ENCODE measurements at regions of chr14 and their contacts with region 1.

Region 1: GRCh38 chr14:96100161-96101029 is 61.2 kb downstream of the C14orf132 start:
- DNase-seq: no peak
- H3K4me3 ChIP-seq: no peak overlapping the region
- CTCF ChIP-seq: peak; percentile 86

Region 2: GRCh38 chr14:95561001-95561412 is 539.4 kb before region 1 on chr14:
- CTCF ChIA-PET with region 1: interaction called, 14 read pairs
- POLR2A ChIA-PET with region 1: no interaction called
- DNase-seq: peak; percentile 21
- H3K4me3 ChIP-seq: no peak overlapping the region
- CTCF ChIP-seq: peak; percentile 85

Region 3: GRCh38 chr14:95935228-95935822 is 165.1 kb before region 1 on chr14:
- CTCF ChIA-PET with region 1: no interaction called
- POLR2A ChIA-PET with region 1: no interaction called
- DNase-seq: no peak
- H3K4me3 ChIP-seq: no peak overlapping the region
- CTCF ChIP-seq: no peak

Region 4: DNA sequence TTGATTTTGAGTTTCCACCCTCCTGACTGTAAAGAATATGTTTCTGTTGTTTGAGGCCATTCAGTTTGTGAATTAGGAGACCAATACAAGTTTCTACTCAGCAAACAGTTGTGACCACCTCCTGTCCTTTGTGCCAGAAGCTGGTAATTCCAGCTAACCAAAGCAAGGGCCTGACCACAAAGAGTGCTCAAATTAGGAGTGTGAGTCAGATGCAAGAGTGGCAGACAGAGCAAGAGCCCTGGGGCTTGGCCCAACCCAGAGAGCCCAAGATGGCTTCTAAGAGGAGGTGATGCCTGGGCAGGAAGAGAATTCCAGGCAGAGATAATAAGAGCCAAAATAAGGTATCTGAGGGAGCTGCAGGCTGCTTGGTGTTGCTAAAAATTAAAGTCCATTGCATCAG is 138.9 kb before region 1 on chr14:
- CTCF ChIA-PET with region 1: no interaction called
- POLR2A ChIA-PET with region 1: no interaction called
- DNase-seq: no peak
- H3K4me3 ChIP-seq: no peak overlapping the region
- CTCF ChIP-seq: no peak

Region 5: DNA sequence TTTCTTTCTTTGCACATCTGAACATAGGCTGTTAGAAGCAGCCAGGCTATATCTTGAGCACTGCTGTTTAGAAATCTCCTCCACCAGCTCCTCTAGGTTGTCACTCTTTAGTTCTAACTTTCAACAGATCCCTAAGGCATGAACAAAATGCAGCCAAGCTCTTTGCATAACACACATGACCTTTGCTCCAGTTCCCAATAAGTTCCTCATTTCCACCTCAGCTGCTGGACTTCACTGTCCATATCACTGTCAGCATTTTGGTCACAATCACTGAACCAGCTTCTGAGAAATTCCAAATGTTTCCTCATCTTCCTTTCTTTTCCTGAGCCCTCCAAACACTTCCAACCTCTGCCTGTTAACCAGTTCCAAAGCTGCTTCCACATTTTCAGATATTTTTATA is 88.8 kb before region 1 on chr14:
- CTCF ChIA-PET with region 1: interaction called, 708 read pairs
- POLR2A ChIA-PET with region 1: no interaction called
- DNase-seq: no peak
- H3K4me3 ChIP-seq: no peak overlapping the region
- CTCF ChIP-seq: no peak

Region 6: GRCh38 chr14:96056509-96057422 is 43.6 kb before region 1 on chr14:
- CTCF ChIA-PET with region 1: interaction called, 10 read pairs
- POLR2A ChIA-PET with region 1: no interaction called
- DNase-seq: no peak
- H3K4me3 ChIP-seq: no peak overlapping the region
- CTCF ChIP-seq: no peak

Region 7: DNA sequence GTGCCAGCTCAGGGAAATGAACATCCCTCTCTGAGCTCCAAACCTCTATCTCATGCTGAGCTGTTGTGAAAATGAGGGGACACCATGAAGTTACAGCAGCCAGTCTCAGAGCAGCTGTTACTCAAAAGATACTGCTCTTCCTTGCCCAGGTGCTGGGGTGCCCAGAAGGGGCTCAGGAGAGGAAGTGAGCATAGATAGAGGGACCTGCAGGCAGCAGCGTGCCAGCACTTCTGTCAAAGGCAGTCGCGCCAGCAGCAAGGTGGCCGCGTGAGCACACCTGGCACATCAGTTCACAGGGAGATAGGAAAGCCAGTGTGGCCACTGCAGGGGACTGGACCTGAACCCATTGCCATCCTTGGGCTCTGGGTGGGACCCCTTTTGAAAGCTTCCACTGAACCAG is 33.4 kb before region 1 on chr14:
- CTCF ChIA-PET with region 1: no interaction called
- POLR2A ChIA-PET with region 1: no interaction called
- DNase-seq: no peak
- H3K4me3 ChIP-seq: no peak overlapping the region
- CTCF ChIP-seq: no peak

Region 8: DNA sequence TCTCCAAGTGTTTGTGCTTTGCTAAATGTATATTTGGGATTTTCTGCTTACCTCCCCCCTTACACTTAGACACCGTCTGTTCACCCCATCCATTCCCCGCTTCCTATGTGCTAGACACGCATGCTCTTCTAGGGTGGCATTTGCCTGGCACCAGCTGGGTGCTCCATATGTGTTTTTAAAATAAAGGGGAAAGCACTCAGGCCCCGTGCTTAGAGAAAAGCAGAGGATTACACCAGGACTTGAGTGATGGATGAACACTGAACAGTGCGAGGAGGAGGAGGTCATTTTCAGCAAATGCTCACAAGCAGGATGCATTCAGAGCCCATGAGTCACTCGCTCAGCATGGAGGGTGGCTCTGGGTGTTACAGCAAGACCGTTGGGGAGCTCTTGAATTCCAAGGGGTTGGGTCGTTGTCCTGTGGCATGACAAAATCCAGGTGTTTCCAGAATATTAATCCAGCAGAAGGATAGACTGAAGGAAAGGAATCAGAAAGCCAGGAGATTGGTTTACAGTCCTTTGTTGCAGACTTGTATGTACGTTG is 152.7 kb after region 1 on chr14:
- CTCF ChIA-PET with region 1: interaction called, 111 read pairs
- POLR2A ChIA-PET with region 1: no interaction called
- DNase-seq: peak; percentile 81
- H3K4me3 ChIP-seq: no peak overlapping the region; the same call in 1 of the 2 replicates
- CTCF ChIP-seq: no peak

Region 9: DNA sequence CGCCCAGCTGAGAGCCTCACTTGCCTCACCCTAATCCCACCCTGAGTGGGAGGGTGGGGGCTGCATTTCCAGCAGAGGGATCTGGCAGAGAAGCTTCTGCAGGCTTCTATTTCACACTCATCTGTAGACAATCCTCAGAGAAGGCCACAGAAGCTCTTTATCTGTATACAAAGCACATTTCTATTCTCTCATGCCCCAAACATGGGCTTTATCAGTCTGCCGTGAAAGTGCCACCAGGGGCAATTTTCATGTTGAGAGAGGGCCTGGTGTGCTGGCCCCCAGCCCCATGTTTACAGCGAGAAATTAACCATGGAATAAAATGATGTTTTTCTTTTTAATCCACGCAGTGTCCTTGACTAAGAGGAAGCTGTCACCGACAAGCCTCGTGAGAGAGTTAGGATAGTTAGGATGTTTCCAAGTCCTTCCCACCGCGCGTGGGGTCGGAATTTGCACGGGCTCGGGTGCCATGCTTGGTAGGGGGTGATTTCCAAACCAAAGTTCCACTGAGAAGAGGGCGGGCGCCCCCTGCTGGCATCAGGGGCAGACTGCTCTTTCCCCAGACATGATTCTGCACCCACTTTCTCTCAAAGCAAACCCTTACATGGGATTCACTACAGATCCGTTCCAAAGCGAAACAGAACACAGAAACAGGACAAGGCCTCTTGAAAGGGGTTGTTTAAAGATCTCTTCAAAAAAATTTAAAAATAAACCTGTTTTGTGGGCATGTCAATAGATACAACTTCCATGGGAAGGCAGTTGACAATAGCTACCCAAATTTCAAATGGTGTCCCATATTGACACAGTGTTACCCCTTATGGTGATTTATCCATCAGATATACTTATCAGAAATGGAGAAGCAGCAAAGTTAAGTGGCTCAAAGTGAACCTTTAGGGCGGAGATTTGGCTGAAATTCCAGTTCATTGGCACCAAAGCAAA is 175.1 kb after region 1 on chr14:
- CTCF ChIA-PET with region 1: interaction called, 746 read pairs
- POLR2A ChIA-PET with region 1: no interaction called
- DNase-seq: peak; percentile 52
- H3K4me3 ChIP-seq: no peak overlapping the region
- CTCF ChIP-seq: peak; percentile 97

Region 10: GRCh38 chr14:96309896-96310330 is 209.5 kb after region 1 on chr14:
- CTCF ChIA-PET with region 1: interaction called, 12 read pairs
- POLR2A ChIA-PET with region 1: no interaction called
- DNase-seq: no peak
- H3K4me3 ChIP-seq: no peak overlapping the region
- CTCF ChIP-seq: no peak

Measured in AG04449 (cell line).